ENCODE measurements at regions of chr4 and their contacts with region 1.

Region 1: DNA sequence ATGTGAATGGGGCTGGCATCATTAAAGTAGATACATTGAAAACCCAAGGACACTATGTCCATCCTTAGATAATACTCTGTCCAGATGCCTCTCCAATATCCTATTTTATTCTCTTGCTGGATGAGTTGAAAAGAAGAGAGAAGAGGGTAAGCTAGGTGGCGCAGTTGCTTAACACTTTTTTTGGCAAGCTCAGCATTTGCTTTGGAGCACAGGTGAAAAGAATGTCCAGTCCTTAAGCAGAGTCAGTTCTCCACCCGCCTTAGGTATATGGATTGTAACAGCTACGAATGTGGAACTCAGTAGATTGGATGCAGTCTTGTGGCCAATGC is 208.4 kb downstream of the NWD2 start:
- DNase-seq: no peak
- H3K4me3 ChIP-seq: no peak overlapping the region
- H3K27ac ChIP-seq: no peak overlapping the region
- H3K27me3 ChIP-seq: peaks cover 27% of the 10 kb centered on the region
- CTCF ChIP-seq: peak; percentile 38

Region 2: DNA sequence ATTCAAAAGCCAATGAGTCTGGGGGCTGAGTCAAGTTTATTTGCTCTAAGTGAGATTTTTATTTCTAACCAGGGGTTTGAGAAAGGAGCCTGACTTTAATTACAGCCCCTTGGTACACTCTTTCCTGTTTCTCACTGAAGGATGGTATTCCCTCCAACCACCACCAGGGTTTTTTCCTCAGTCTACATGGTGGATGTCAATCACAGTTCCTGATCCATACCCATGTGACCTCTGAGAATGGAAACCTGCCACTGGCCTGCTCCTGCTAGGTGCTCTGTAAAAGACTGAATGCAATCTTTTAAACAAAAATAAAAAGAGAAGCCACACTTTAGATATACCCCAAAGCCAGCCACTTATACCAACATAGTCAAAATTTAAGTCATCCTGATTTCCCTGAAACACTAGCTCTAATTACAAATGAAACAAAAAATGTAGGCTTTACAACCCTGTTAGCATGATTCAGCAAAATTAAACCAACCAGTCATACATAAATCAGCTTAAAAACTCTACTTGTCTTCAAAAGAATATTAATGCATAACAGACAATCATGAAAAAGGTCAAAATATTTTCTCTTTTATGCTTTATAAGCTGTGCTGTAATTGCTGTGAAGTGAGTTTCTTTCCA is 320.5 kb before region 1 on chr4:
- CTCF ChIA-PET with region 1: no interaction called
- POLR2A ChIA-PET with region 1: no interaction called
- DNase-seq: no peak
- H3K4me3 ChIP-seq: no peak overlapping the region
- H3K27ac ChIP-seq: no peak overlapping the region
- H3K27me3 ChIP-seq: no peaks in the 10 kb centered on the region
- CTCF ChIP-seq: no peak

Region 3: GRCh38 chr4:37567841-37568240 is 114.9 kb after region 1 on chr4:
- CTCF ChIA-PET with region 1: interaction called, 11 read pairs
- POLR2A ChIA-PET with region 1: no interaction called
- DNase-seq: no peak
- H3K4me3 ChIP-seq: no peak overlapping the region
- H3K27ac ChIP-seq: no peak overlapping the region
- H3K27me3 ChIP-seq: no peaks in the 10 kb centered on the region
- CTCF ChIP-seq: no peak

Measured in AG04450 (cell line).